CD8-positive, alpha-beta T cell (primary cell): ENCODE measurements at regions of chr16 and their contacts with region 1.

Region 1: GRCh38 chr16:53159781-53160436 is 105.1 kb downstream of the CHD9 start:
- DNase-seq: peak in 3 of 9 experiments; percentile 23 to 79 (median 71)
- ATAC-seq: peak; percentile 87
- H3K4me3 ChIP-seq: no peak overlapping the region
- H3K4me3 Mint-ChIP-seq: no peak overlapping the region
- H3K27ac ChIP-seq: no peak overlapping the region
- H3K27ac Mint-ChIP-seq: no peak overlapping the region
- H3K4me1 ChIP-seq: no peaks in the 10 kb centered on the region
- H3K4me1 Mint-ChIP-seq: peaks cover 3% of the 10 kb centered on the region
- H3K27me3 ChIP-seq: no peaks in the 10 kb centered on the region
- H3K27me3 Mint-ChIP-seq: no peaks in the 10 kb centered on the region
- CTCF ChIP-seq: peak; percentile 83

Region 2: GRCh38 chr16:52964290-52964689 is 195.6 kb before region 1 on chr16:
- CTCF ChIA-PET with region 1: no interaction called
- POLR2A ChIA-PET with region 1: no interaction called
- intact Hi-C with region 1: no loop called
- DNase-seq: no peak
- ATAC-seq: no peak
- H3K4me3 ChIP-seq: no peak overlapping the region
- H3K4me3 Mint-ChIP-seq: no peak overlapping the region
- H3K27ac ChIP-seq: no peak overlapping the region
- H3K27ac Mint-ChIP-seq: no peak overlapping the region
- H3K4me1 ChIP-seq: no peaks in the 10 kb centered on the region
- H3K4me1 Mint-ChIP-seq: no peaks in the 10 kb centered on the region
- H3K27me3 ChIP-seq: no peaks in the 10 kb centered on the region
- H3K27me3 Mint-ChIP-seq: peaks cover 9% of the 10 kb centered on the region
- CTCF ChIP-seq: no peak

Region 3: DNA sequence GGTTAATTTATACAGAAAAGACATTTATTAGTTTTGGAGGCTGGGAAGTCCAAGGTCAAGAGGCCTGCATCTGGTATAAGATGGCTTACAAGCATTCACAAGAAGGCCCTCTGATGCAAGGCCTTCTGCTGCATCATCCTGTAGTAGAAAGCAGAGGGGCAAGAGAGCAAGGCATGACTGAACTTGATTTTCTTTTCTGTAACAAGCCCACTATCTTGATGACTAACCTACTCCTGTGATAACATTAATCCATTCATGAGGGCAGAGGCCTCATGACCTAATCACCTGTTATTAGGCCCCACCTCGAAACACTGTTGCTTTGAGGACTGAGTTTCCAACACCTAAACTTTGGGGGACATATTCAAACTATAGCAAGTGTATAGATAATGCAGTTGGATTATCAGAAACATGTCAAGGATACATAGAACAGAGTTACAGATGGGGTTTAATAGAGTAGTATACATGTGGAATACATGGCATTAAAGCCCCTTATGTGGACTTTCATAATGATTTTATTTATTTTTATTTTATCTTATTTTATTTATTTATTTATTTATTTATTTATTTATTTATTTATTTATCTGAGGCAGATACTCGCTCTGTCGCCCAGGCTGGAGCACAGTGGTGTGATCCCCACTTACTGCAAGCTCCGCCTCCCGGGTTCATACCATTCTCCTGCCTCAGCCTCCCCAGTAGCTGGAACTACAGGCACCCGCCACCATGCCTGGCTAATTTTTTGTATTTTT is 16.9 kb before region 1 on chr16:
- CTCF ChIA-PET with region 1: interaction called, 10 read pairs
- POLR2A ChIA-PET with region 1: no interaction called
- intact Hi-C with region 1: no loop called
- DNase-seq: no peak
- ATAC-seq: no peak
- H3K4me3 ChIP-seq: no peak overlapping the region
- H3K4me3 Mint-ChIP-seq: no peak overlapping the region
- H3K27ac ChIP-seq: no peak overlapping the region
- H3K27ac Mint-ChIP-seq: no peak overlapping the region
- H3K4me1 ChIP-seq: no peaks in the 10 kb centered on the region
- H3K4me1 Mint-ChIP-seq: peaks cover 10% of the 10 kb centered on the region
- H3K27me3 ChIP-seq: no peaks in the 10 kb centered on the region
- H3K27me3 Mint-ChIP-seq: no peaks in the 10 kb centered on the region
- CTCF ChIP-seq: no peak

Region 4: DNA sequence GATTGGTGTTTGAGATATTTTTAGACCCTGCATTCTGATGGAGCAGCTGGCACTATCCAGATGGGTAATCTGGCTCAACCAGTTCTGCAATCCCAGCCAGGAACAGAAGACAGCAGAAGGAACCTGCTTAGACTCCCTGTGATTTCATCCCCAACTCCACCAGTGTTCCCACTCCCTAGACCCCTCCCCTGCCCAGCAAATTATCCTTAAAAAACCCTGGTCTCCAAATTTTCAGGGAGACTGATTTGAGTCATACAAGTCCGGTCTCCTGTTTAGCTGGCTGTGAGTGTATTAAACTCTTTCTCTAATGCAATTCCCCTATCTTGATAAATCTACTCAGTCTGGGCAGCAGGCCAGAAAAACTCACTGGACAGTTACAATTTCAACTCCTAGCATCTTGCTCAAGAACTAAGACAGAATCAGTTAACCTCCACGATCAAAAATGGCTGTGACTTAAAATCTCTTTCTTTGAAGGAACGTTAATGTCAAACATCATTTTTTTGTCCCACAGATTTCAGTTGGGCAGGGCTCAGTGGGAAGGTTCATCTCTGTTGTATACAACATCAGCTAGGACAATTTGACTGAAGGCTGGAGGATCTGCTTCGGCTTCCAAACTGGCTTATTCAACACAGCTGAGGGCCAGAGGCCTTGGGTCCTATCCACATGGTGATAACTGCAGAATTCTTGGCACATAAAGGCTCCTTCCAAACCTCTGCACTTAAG is 269.5 kb after region 1 on chr16:
- CTCF ChIA-PET with region 1: no interaction called
- POLR2A ChIA-PET with region 1: no interaction called
- intact Hi-C with region 1: no loop called
- DNase-seq: no peak
- ATAC-seq: no peak
- H3K4me3 ChIP-seq: no peak overlapping the region
- H3K4me3 Mint-ChIP-seq: no peak overlapping the region
- H3K27ac ChIP-seq: no peak overlapping the region
- H3K27ac Mint-ChIP-seq: no peak overlapping the region
- H3K4me1 ChIP-seq: peaks cover 9% of the 10 kb centered on the region
- H3K4me1 Mint-ChIP-seq: peaks cover 11% of the 10 kb centered on the region
- H3K27me3 ChIP-seq: no peaks in the 10 kb centered on the region
- H3K27me3 Mint-ChIP-seq: no peaks in the 10 kb centered on the region
- CTCF ChIP-seq: no peak